ENCODE measurements at regions of chr12 and their contacts with region 1.

Region 1: GRCh38 chr12:81644503-81644902 is 114.6 kb downstream of the PPFIA2 start:
- DNase-seq: no peak
- H3K4me3 ChIP-seq: no peak overlapping the region
- H3K27ac ChIP-seq: no peak overlapping the region
- H3K4me1 ChIP-seq: no peaks in the 10 kb centered on the region
- H3K27me3 ChIP-seq: no peaks in the 10 kb centered on the region
- CTCF ChIP-seq: peak in 3 of 4 experiments; percentile 22 to 58 (median 51)
- POLR2A ChIP-seq: no peak

Region 2: DNA sequence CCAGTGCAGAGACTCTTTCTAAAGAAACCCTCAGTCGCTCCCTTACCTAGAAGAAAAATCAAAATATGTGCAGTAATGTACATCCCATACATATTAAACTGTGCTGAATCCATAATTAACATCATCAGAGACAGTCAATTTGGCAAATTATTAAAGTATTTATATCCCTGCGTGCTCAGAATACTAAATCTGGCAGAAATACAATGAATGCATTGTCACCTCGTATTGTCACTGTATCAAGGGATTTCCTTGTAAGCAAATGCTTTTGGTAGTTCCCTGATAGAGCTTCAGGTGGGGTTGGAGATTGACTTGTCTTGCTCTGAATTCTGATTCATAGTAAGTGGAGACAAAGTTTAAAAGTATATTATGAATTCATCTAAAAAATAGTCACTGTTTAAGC is 204.5 kb before region 1 on chr12:
- intact Hi-C with region 1: no loop called
- DNase-seq: no peak
- H3K4me3 ChIP-seq: no peak overlapping the region
- H3K27ac ChIP-seq: no peak overlapping the region
- H3K4me1 ChIP-seq: no peaks in the 10 kb centered on the region
- H3K27me3 ChIP-seq: no peaks in the 10 kb centered on the region
- CTCF ChIP-seq: no peak
- POLR2A ChIP-seq: no peak

Region 3: DNA sequence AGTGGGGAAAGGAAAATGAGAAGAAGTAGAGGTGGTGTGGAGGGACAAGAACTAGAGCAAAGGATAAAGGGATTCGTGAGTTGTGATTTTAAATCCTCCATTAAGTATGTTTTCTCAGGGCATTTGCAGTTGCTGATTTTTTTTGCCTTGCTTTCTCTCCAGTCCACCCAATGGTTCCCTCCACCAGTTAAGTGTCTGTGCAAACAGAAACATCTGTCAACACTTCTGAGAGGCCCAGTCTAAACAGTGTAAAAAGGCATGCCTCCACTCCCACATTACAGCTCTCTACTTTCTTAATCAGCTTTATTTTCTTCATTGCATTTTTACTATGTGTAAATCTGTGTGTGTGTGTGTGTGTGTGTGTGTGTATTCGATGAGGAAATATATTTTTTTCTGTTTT is 26.6 kb before region 1 on chr12:
- intact Hi-C with region 1: no loop called
- DNase-seq: no peak
- H3K4me3 ChIP-seq: no peak overlapping the region
- H3K27ac ChIP-seq: no peak overlapping the region
- H3K4me1 ChIP-seq: no peaks in the 10 kb centered on the region
- H3K27me3 ChIP-seq: no peaks in the 10 kb centered on the region
- CTCF ChIP-seq: no peak
- POLR2A ChIP-seq: no peak

Region 4: DNA sequence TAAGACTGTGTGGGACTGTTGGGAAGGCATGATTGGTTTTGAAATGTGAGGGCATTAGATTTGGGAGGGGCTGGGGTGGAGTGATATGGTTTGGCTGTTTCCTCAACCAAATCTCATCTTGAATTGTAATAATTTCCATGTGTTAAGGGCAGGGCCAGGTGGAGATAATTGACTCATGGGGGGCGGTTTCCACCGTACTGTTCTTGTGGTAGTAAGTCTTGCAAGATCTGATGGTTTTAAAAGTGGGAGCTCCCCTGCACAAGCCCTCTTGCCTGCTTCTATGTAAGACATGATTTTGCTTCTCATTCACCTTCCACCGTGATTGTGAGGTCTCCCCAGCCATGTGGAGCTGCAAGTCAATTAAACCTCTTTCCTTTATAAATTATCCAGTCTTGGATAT is 191.3 kb after region 1 on chr12:
- intact Hi-C with region 1: no loop called
- DNase-seq: no peak
- H3K4me3 ChIP-seq: no peak overlapping the region
- H3K27ac ChIP-seq: no peak overlapping the region
- H3K4me1 ChIP-seq: no peaks in the 10 kb centered on the region
- H3K27me3 ChIP-seq: no peaks in the 10 kb centered on the region
- CTCF ChIP-seq: no peak
- POLR2A ChIP-seq: no peak

Region 5: DNA sequence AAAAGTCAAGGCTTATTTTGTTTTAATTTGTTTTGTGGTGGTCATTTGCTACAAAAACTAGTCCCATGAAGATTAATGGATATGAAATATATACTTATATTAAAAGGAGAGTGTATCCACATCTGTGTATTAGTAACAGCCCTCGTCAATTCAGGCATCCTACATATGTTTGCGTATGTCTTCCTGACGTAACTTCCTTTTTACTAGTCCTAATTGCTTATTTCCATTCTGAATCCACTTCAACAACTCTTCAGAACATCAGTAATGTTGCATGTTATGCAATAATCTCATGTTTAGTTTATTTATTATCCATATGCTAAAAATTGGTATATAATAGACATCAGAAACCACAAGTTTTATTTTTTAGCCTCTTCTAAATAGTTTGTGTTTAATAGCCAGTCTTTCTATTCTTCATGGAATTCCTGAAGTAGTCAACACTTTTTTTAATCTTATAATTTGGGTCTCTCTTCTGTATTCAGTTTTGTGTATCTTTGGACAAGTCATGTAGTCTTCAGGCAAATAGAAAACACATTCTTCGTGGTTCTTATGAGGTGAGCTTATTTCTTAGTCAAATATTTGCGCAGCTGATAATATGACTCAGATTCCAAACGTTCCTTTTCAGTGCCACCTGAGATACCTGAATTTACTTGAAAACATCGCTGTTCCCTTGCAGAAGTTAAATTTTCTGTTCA is 445.0 kb after region 1 on chr12:
- intact Hi-C with region 1: no loop called
- DNase-seq: no peak
- H3K4me3 ChIP-seq: no peak overlapping the region
- H3K27ac ChIP-seq: no peak overlapping the region
- H3K4me1 ChIP-seq: no peaks in the 10 kb centered on the region
- H3K27me3 ChIP-seq: no peaks in the 10 kb centered on the region
- CTCF ChIP-seq: no peak
- POLR2A ChIP-seq: no peak

Region 6: GRCh38 chr12:82326905-82327503 is 682.5 kb after region 1 on chr12:
- intact Hi-C with region 1: loop called (anchors 5 kb)
- DNase-seq: no peak
- H3K4me3 ChIP-seq: no peak overlapping the region
- H3K27ac ChIP-seq: no peak overlapping the region
- H3K4me1 ChIP-seq: no peaks in the 10 kb centered on the region
- H3K27me3 ChIP-seq: no peaks in the 10 kb centered on the region
- CTCF ChIP-seq: peak in 3 of 4 experiments; percentile 21 to 34 (median 28)
- POLR2A ChIP-seq: no peak